ENCODE measurements at regions of chr13 and their contacts with region 1.

Region 1: DNA sequence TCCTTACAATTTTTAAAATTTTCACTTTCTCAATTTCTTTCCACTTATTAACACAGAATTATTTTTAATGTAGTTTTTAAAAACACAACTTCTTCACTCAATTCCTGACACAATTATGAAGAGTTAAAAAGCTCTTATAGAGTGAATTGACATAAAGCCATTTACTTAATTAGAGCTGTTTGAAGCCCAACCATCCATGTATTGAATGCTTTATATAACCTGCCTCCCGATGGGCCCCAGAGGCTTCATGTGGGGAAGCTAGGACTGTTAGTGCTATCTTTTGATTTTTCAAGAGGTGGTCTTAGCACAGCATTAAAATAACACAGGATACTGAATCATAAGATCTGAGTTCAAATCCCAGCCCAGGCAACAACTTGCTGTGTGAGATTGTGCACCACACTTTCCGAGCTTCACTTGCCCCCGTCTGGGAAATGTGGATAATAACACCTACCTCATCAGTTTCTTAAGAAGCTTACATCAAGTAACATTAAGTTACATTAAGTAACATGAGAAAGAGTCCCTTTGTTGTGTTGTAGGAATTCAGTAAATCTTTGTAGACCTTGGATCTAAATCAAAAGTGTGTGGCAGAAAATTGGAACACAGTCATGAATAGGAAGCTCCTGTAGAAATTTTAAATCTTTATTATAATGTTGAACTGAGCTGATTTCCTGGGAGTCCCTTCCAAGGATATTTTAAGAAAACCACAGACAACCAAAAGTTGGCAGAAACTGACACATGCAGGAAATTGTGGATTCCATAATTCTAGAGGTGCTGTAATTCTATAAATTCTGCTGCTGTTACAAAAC is 5.5 kb upstream of the ENOX1 start:
- DNase-seq: no peak
- ATAC-seq: no peak

Region 2: GRCh38 chr13:43206838-43207237 is 585.4 kb before region 1 on chr13:
- intact Hi-C with region 1: loop called (anchors 10 kb)
- DNase-seq: no peak
- ATAC-seq: no peak

Region 3: GRCh38 chr13:43316946-43317353 is 475.3 kb before region 1 on chr13:
- intact Hi-C with region 1: loop called (anchors 10 kb)
- DNase-seq: peak; percentile 28
- ATAC-seq: peak; percentile 45

Measured in left ventricle myocardium superior (tissue), 1 donor.